ENCODE measurements at regions of chr17 and their contacts with region 1.

Region 1: GRCh38 chr17:65332375-65332774 is 195.2 kb downstream of the RGS9 start:
- DNase-seq: peak; percentile 57
- H3K4me3 ChIP-seq: no peak overlapping the region
- H3K27ac ChIP-seq: no peak overlapping the region
- H3K4me1 ChIP-seq: no peaks in the 10 kb centered on the region
- H3K27me3 ChIP-seq: peaks cover 1% of the 10 kb centered on the region
- CTCF ChIP-seq: no peak

Region 2: DNA sequence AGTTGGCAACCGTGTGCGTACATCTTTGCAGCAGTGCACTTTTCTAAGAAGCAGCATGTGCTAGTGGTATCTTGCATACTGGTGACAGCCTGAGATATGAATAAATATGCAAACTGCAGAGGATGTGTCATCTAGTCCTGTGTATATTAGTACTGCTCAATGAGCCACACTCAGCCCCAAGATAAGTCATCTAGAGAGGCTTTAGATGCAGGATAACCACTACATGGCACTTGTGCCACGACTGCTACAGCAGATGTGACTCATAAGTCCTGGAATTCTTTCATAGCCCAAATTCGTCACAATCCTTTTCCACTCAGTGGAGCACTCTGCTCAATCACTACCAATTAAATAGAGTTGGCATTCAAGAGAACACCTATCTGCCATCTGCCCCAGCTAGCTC is 57.6 kb after region 1 on chr17:
- CTCF ChIA-PET with region 1: no interaction called
- dilution Hi-C with region 1: loop called (anchors 5 kb)
- in situ Hi-C with region 1: no loop called
- intact Hi-C with region 1: no loop called
- DNase-seq: peak; percentile 27
- H3K4me3 ChIP-seq: no peak overlapping the region
- H3K27ac ChIP-seq: no peak overlapping the region
- H3K4me1 ChIP-seq: no peaks in the 10 kb centered on the region
- H3K27me3 ChIP-seq: no peaks in the 10 kb centered on the region
- CTCF ChIP-seq: no peak

Region 3: DNA sequence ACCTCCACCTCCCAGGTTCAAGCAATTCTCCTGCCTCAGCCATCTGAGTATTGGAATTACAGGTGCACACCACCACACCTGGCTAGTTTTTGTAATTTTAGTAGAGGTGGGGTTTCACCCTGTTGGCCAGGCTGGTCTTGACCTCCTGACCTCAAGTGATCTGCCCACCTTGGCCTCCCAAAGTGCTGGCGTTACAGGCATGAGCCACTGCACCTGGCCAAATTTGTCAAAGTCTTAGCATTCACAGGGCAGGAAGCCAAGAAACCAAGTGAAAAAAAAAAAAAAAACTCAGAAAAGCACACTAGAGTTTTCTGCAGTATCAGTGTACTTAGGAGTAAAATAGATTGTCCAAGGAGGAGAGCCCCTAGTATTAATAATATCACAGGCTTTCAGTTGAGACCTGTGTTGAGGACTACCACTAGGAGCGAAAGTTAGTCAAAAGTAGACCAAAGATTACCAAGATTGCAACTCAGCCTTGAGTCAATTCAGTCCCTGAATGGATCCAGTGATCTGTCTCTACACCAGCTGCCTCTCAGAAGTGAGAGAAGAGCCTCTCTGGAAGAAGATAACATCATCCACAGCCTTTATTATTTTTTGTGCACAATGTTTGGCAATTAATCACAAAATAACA is 699.8 kb after region 1 on chr17:
- CTCF ChIA-PET with region 1: interaction called, 12 read pairs
- dilution Hi-C with region 1: no loop called
- in situ Hi-C with region 1: no loop called
- intact Hi-C with region 1: no loop called
- DNase-seq: no peak
- H3K4me3 ChIP-seq: no peak overlapping the region
- H3K27ac ChIP-seq: no peak overlapping the region
- H3K4me1 ChIP-seq: no peaks in the 10 kb centered on the region
- H3K27me3 ChIP-seq: no peaks in the 10 kb centered on the region
- CTCF ChIP-seq: no peak

Measured in mammary epithelial cell (primary cell).